GM10248 (cell line): ENCODE measurements at regions of chr3 and their contacts with region 1.

Region 1: GRCh38 chr3:62201438-62202035 is 171.8 kb downstream of the FEZF2 start:
- DNase-seq: peak; percentile 40
- CTCF ChIP-seq: peak; percentile 52

Region 2: GRCh38 chr3:62039586-62039985 is 162.0 kb before region 1 on chr3:
- CTCF ChIA-PET with region 1: no interaction called
- POLR2A ChIA-PET with region 1: no interaction called
- DNase-seq: no peak
- CTCF ChIP-seq: no peak

Region 3: GRCh38 chr3:62188681-62189383 is 12.7 kb before region 1 on chr3:
- CTCF ChIA-PET with region 1: interaction called, 20 read pairs
- POLR2A ChIA-PET with region 1: no interaction called
- DNase-seq: peak; percentile 80
- CTCF ChIP-seq: peak; percentile 75

Region 4: DNA sequence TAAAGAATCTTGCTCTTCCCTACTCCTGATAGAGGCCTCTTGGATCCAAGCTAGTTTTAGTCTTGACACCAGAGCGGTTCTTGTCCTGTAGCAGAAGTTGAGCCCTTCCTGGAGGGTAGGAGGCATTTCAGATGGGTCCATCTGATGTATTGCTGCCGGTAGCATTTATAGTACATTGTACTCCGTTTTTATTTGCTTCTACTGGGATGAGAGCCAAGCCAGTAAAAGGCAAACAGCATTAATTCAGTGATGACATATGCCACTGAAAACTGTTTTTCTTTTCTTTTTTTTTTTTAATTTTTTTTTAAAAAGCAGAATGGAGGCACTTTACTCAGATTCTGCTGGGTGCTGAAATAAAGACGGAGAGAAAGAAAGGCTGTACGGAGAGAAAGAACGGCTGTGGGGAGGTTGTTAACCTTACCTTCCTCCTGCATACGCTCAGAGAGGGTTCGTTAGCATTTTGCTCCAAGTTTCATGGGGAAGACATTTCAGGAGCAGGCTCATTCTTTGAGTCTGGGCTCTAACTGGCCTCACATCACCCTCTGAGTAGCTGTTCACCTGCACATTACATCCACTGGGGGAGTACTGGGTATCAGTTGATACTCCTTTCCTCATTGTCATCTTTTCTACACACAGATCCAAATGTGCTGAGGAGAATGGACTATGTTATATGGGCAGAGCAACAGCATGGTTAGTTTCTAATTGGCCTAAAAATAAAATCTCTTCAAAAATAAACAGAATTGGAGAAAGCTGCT is 10.3 kb after region 1 on chr3:
- CTCF ChIA-PET with region 1: interaction called, 12 read pairs
- POLR2A ChIA-PET with region 1: no interaction called
- DNase-seq: no peak
- CTCF ChIP-seq: no peak

Region 5: DNA sequence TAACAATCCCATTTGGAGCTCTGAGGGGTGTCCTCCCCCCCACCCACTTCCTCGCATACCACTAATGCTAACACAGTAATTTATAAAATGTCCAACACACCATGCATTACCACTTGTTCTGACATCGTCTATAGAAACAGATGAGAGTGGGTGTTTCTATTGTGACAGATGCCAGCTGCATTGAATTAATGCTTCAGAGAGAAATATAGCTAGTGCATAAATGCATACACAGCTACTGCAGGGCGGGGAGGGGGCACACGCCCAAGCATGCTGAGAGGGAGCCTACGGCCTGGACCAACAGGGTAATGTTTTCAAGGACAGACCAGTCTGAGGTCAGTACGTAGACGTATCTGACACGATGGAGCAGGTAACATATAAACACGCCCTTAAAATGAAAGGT is 277.8 kb after region 1 on chr3:
- CTCF ChIA-PET with region 1: no interaction called
- POLR2A ChIA-PET with region 1: no interaction called
- DNase-seq: no peak
- CTCF ChIP-seq: no peak

Region 6: DNA sequence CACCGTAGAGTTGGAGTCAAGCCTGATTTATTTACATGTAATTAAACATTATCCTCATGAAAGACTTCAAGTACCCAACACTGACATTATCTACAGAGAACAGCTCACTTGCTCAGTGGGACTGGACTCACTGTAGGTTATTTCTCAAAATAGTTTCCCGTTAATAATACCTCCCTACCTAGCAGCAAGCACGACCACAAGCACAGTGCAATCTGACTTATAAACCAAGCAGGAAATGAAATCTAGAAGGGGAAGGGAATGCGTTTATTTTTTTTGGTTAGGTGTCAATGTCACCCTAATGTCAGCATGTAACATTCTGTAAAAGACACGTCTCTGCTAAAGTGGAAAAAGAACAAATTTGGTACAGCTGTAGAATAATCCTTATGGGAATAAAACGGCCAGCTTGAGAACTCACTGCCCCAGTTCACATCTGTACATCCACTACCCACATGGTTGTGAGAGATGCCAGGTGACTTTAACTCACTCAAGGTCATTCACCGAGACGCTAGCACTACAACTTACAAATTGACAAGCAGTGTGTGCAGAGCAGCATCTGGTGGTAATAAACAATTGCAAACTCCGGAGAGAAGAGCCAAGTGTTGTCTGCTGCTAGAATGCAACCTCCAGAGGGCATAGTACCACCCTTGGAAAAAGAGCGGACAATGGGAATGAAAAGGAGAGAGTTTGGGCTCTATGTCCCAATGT is 431.1 kb after region 1 on chr3:
- CTCF ChIA-PET with region 1: no interaction called
- POLR2A ChIA-PET with region 1: no interaction called
- DNase-seq: no peak
- CTCF ChIP-seq: no peak